Activated T-helper 1 cell treated with anti-CD3 and anti-CD28 coated beads, Interleukin-12 subunit alpha, Interleukin-12 subunit beta, Interleukin-2, Interleukin-4 antibody, amounts not matched to agents 30 ng/mL and 10 ng/mL and 1 ng/mL, durations not matched to agents 14 hours and 24 hours and 36 hours (primary cell): ENCODE measurements at regions of chr4 and their contacts with region 1.

Region 1: GRCh38 chr4:7960790-7961655 is 21.4 kb upstream of the AFAP1 start:
- DNase-seq: peak; percentile 70
- H3K4me3 Mint-ChIP-seq: peak overlapping the region; percentile 3
- H3K27ac Mint-ChIP-seq: peak overlapping the region; percentile 73
- H3K4me1 Mint-ChIP-seq: peaks cover 66% of the 10 kb centered on the region
- H3K27me3 Mint-ChIP-seq: peaks cover 4% of the 10 kb centered on the region

Region 2: DNA sequence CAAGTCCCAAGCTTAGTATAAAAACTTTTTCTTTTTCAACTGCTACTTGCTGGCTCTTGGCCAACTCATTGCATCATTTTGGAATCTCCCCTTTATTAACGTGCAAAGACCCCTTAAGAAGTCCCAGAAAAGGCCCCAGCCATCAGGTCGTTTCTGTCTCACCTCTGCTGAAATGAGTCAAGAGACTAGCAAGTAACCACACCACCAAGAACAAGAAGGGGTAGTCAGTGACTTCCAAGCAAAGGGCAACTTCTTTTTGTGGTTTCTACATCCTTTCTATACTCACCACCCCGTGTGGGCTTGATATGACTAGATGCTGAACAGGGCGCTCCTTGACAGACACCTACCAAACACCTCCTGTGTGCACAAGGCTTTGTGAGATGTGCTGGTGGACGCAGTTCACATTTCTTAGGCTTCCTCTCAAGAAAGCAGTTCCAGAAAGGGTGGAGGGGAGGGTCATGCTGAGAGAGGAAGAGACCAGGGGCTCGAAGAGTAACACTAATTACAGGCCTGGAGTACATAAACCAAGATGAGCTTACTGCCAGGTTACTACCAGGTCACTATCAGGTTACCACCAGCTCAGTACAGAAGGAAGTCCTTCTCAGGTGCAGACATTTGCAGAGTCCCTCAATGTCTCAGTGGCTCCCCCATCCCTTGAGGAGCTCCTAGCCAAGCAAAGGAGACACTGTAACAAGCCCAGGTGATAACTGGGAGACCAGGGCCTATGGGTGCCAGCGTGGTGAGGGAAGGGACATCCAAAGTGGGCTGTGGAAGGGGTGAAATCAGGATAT is 1780.0 kb before region 1 on chr4:
- intact Hi-C with region 1: loop called (anchors 5 kb)
- DNase-seq: peak; percentile 74
- H3K4me3 Mint-ChIP-seq: peak overlapping the region; percentile 72
- H3K27ac Mint-ChIP-seq: peak overlapping the region; percentile 95
- H3K4me1 Mint-ChIP-seq: peaks cover 86% of the 10 kb centered on the region
- H3K27me3 Mint-ChIP-seq: no peaks in the 10 kb centered on the region

Region 3: GRCh38 chr4:6892190-6892908 is 1068.7 kb before region 1 on chr4:
- intact Hi-C with region 1: loop called (anchors 10 kb)
- DNase-seq: peak; percentile 34
- H3K4me3 Mint-ChIP-seq: peak overlapping the region; percentile 43
- H3K27ac Mint-ChIP-seq: peak overlapping the region; percentile 78
- H3K4me1 Mint-ChIP-seq: peaks cover 36% of the 10 kb centered on the region
- H3K27me3 Mint-ChIP-seq: no peaks in the 10 kb centered on the region

Region 4: DNA sequence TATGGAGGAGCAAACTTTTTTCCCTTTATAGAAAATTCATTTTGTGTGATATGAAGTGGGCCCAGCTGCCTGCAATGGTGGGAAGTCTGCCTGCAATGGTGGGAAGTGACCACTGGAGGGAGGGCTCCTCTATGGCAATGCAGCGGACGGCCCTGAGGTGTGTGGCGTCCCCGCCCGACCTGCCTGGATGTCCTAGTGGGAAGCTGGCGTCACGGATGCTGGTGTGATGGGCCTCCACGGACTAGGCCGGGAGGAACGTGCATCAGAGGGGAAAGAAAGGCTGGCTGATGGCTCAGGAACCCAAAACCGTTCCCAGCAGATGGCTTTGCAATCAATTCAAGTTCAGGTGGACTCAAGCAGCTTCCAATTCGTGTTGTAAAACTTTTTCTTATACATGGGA is 199.3 kb before region 1 on chr4:
- intact Hi-C with region 1: loop called (anchors 5 kb)
- DNase-seq: peak; percentile 26
- H3K4me3 Mint-ChIP-seq: no peak overlapping the region
- H3K27ac Mint-ChIP-seq: no peak overlapping the region
- H3K4me1 Mint-ChIP-seq: peaks cover 43% of the 10 kb centered on the region
- H3K27me3 Mint-ChIP-seq: no peaks in the 10 kb centered on the region

Region 5: GRCh38 chr4:7863911-7864681 is 96.9 kb before region 1 on chr4:
- intact Hi-C with region 1: loop called (anchors 2 kb)
- DNase-seq: no peak
- H3K4me3 Mint-ChIP-seq: no peak overlapping the region
- H3K27ac Mint-ChIP-seq: peak overlapping the region; percentile 79
- H3K4me1 Mint-ChIP-seq: peaks cover 22% of the 10 kb centered on the region
- H3K27me3 Mint-ChIP-seq: peaks cover 10% of the 10 kb centered on the region

Region 6: DNA sequence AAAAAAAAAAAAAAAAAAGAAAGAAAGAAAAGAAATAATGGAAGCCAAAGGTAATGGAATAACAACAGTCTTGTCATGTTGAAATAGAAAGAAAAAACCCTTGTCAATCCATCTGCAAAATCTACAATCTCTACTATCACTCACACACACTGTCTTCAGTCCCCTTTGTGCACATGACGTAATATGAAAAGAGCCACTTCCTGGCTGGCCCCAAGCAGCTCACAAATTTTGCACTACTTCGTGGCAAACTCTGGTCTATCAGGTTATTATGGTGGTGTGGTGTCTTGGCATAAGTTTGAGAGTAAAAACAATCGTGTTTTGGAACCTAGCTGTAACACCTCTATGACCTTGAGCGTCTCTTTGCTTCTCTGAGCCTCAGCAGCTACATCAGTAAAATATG is 13.1 kb before region 1 on chr4:
- intact Hi-C with region 1: loop called (anchors 1 kb)
- DNase-seq: no peak
- H3K4me3 Mint-ChIP-seq: no peak overlapping the region
- H3K27ac Mint-ChIP-seq: no peak overlapping the region
- H3K4me1 Mint-ChIP-seq: peaks cover 16% of the 10 kb centered on the region
- H3K27me3 Mint-ChIP-seq: peaks cover 8% of the 10 kb centered on the region

Region 7: GRCh38 chr4:8419181-8420041 is 458.4 kb after region 1 on chr4:
- intact Hi-C with region 1: loop called (anchors 1 kb)
- DNase-seq: peak; percentile 21
- H3K4me3 Mint-ChIP-seq: peak overlapping the region; percentile 0
- H3K27ac Mint-ChIP-seq: peak overlapping the region; percentile 92
- H3K4me1 Mint-ChIP-seq: peaks cover 18% of the 10 kb centered on the region
- H3K27me3 Mint-ChIP-seq: no peaks in the 10 kb centered on the region